Activated T-helper 1 cell treated with anti-CD3 and anti-CD28 coated beads, Interleukin-12 subunit alpha, Interleukin-12 subunit beta, Interleukin-2, Interleukin-4 antibody, amounts not matched to agents 30 ng/mL and 10 ng/mL and 1 ng/mL, durations not matched to agents 14 hours and 24 hours and 36 hours (primary cell): ENCODE measurements at regions of chr5 and their contacts with region 1.

Region 1: DNA sequence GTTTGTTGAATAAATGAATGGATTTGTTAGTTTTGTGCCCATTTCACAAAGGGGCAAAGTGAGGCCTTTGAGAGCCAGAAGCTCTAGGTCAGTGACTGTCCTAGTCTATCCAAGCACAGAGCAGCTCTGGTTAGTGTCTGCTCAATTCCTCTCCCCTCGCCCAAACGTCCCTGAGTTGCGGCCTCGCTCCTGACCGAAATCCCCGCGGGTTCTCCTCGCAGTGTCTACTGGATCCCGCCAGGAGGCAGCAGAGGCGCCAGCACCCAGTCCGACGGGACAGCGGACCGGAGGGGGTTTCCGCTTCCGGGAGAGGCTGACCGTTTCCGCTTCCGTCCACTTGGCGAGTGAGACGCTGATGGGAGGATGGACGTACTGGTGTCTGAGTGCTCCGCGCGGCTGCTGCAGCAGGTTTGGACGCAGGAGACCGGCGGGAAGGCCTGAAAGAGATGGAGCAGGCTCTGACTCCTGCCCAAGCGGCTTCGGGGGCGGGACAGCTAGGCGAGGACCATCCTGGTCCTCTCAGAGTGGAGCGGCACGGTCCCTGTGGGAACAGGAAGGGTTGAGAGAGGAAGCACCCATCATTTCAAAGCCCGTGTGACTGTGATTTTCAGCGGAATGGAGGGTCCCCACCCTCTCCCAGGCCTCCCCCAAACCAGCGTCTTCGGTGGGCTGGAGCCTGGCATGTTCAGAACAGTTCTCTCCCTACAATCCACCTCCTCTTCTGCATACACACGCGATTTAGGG is at the start of gene RARS1:
- DNase-seq: peak; percentile 86
- H3K4me3 Mint-ChIP-seq: peak within 1 kb of the TSS; percentile 100
- H3K27ac Mint-ChIP-seq: peak within 1 kb of the TSS; percentile 86
- H3K4me1 Mint-ChIP-seq: peaks cover 38% of the 10 kb centered on the region
- H3K27me3 Mint-ChIP-seq: no peaks in the 10 kb centered on the region
- total RNA-seq, gene RARS1: 137 and 145 TPM in 2 replicates

Region 2: DNA sequence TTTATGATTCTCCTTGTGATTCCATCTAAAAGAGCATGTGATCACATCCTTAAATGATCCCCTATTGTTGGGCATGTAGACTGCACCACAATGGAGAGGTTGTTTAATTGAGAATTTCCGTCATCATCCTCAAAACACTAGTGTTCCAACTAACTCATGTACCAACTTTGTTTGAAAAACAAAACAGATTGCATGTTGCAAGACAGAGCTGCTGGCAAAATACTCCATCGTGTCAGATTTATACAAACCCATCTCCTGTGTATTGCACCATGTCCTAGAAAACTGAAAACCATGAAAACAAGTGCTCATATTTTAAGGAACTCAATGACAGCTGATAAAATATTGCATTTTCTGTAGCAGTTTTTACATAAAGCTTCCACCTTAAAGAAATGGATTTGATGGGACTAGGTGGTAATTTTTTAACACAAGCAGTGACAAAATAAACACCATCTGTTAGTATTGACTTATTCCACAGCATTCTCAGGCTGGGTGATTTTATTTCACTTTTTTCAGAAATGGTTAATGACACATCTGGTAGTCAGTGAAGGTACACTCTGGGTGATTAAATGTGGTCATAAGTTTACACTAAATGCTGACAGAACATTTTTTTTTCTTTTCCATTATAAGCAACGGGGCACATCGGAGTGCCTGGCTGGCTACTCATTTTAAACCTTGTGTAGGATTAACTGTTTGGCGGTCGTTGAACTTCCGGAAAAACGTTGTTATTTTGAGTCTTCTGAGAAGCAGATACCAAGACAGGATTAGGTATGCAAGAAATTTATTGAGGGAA is 797.8 kb before region 1 on chr5:
- intact Hi-C with region 1: no loop called
- DNase-seq: no peak
- H3K4me3 Mint-ChIP-seq: no peak overlapping the region
- H3K27ac Mint-ChIP-seq: no peak overlapping the region
- H3K4me1 Mint-ChIP-seq: no peaks in the 10 kb centered on the region
- H3K27me3 Mint-ChIP-seq: no peaks in the 10 kb centered on the region

Region 3: DNA sequence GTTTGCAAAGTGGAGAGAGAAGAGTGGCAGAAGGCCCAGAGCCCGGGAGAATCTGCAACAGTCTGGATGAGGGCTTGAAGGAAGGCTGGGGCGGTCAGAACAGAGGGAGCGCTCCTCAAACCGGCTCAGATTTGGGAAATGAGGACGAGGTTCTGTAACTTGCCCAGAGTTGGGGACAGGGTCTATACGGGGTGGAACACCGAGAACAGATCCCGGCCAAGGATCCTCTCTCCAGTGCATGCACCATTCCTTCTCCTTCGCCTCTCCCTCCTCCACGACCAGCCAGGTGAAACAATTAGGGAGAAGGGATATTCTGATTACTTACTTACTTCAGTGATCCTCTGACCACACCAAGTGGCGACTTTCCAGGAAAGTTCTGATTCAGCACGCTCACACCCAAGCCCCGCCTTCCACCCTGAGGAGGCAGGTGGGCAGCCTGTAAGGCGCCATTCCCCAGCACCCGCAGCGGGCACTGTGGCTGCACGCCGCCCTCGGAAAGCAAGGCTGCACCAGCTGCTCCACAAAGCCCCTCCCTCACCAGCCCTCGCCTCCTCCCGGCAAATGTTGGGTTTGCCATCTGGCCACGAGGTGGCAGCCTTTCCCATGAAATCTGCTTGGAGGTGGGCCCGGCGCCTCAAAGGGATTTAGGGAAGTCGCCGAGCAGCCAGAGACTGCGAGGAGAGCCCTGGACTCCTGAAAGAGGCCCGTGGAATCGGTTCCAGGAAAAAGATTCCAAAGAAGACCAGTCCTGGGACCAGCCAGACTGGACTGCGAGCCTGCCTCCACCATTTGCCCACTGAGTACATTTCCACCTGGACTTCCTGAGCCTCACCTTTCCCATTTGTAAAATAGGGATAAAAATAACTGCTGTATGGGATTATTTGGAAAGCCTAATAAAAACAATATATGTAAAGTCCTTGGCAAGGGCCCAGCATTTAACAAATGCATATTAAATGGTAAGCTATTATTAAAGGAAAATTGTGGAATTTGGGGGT is 217.1 kb before region 1 on chr5:
- intact Hi-C with region 1: loop called (anchors 1 kb)
- DNase-seq: peak; percentile 48
- H3K4me3 Mint-ChIP-seq: no peak overlapping the region
- H3K27ac Mint-ChIP-seq: no peak overlapping the region
- H3K4me1 Mint-ChIP-seq: peaks cover 6% of the 10 kb centered on the region
- H3K27me3 Mint-ChIP-seq: peaks cover 17% of the 10 kb centered on the region

Region 4: DNA sequence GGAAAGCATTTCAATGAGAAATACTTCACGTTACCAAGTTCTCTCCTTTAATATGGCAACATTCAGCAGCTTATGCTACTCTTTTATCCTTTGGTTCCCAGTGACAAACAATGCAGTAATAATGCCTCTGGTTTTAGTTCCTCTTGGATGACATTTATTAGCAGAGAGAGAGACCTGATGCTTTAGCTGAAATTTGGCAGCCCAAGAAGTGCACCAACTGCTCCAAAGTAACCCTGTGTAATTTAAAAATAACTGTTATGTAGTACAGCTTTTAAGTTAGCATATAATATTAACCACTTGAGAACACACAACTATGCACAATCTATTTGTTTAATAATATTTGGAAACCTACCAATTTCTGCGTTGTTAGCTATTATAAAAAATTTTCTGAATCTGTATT is 71.1 kb after region 1 on chr5:
- intact Hi-C with region 1: loop called (anchors 5 kb)
- DNase-seq: no peak
- H3K4me3 Mint-ChIP-seq: no peak overlapping the region
- H3K27ac Mint-ChIP-seq: no peak overlapping the region
- H3K4me1 Mint-ChIP-seq: no peaks in the 10 kb centered on the region
- H3K27me3 Mint-ChIP-seq: no peaks in the 10 kb centered on the region